Activated naive CD4-positive, alpha-beta T cell treated with anti-CD3 and anti-CD28 coated beads for 36 hours (primary cell): ENCODE measurements at regions of chr4 and their contacts with region 1.

Region 1: DNA sequence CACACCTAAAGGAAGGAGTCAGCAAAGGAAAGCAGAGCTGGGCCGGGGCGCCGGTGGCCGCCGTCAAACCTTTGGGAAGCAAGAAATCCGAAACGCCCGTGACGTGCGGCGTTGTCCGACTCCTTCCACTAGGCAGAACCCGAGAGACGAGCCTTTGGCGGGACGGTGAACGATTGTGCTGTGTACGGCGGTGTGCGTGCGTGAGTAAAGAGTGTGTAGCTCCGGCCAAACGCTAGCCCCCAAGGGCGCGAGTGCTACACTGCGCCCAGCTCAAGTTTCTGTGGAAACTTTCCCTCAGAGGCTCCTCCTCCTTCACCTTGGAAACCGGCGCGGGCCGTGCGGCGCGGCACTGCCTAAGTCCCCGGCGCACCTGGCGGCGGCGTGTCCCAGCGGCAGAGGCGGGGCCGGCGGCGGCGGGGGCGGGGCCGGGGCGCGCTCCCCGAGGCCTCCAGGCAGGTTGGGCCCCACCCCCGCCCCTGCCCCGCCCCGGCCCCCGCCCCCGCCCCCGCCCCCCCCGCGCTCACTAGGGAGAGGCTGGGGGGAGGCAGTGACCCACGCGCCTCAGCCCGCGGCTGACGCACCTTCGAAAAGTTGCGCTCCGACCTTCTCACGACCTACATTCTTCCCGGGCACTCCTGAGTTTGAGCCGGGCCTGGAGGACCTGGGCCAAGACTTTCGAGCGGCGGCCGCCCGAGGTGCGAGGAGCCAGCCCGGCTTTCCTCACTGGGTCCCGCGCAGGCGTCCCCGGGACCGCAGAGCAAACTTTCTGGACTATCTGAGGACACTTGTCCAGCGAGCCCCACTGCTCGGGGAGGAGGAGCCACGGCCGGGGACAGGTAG is at the start of gene FHIP1A:
- DNase-seq: peak; percentile 89
- H3K4me3 Mint-ChIP-seq: peak within 1 kb of the TSS; percentile 88
- H3K27ac Mint-ChIP-seq: peak within 1 kb of the TSS; percentile 60
- H3K4me1 Mint-ChIP-seq: peaks cover 22% of the 10 kb centered on the region
- H3K27me3 Mint-ChIP-seq: peaks cover 17% of the 10 kb centered on the region
- total RNA-seq, gene FHIP1A: 0.07 to 0.17 TPM

Region 2: GRCh38 chr4:151015459-151016347 is 393.1 kb before region 1 on chr4:
- CTCF ChIA-PET with region 1: no interaction called
- intact Hi-C with region 1: loop called (anchors 5 kb)
- DNase-seq: peak; percentile 71
- H3K4me3 Mint-ChIP-seq: peak overlapping the region; percentile 100
- H3K27ac Mint-ChIP-seq: peak overlapping the region; percentile 99
- H3K4me1 Mint-ChIP-seq: peaks cover 23% of the 10 kb centered on the region
- H3K27me3 Mint-ChIP-seq: no peaks in the 10 kb centered on the region

Region 3: GRCh38 chr4:151604238-151604637 is 195.4 kb after region 1 on chr4:
- CTCF ChIA-PET with region 1: no interaction called
- intact Hi-C with region 1: loop called (anchors 2 kb)
- DNase-seq: no peak
- H3K4me3 Mint-ChIP-seq: no peak overlapping the region
- H3K27ac Mint-ChIP-seq: no peak overlapping the region
- H3K4me1 Mint-ChIP-seq: no peaks in the 10 kb centered on the region
- H3K27me3 Mint-ChIP-seq: no peaks in the 10 kb centered on the region

Region 4: DNA sequence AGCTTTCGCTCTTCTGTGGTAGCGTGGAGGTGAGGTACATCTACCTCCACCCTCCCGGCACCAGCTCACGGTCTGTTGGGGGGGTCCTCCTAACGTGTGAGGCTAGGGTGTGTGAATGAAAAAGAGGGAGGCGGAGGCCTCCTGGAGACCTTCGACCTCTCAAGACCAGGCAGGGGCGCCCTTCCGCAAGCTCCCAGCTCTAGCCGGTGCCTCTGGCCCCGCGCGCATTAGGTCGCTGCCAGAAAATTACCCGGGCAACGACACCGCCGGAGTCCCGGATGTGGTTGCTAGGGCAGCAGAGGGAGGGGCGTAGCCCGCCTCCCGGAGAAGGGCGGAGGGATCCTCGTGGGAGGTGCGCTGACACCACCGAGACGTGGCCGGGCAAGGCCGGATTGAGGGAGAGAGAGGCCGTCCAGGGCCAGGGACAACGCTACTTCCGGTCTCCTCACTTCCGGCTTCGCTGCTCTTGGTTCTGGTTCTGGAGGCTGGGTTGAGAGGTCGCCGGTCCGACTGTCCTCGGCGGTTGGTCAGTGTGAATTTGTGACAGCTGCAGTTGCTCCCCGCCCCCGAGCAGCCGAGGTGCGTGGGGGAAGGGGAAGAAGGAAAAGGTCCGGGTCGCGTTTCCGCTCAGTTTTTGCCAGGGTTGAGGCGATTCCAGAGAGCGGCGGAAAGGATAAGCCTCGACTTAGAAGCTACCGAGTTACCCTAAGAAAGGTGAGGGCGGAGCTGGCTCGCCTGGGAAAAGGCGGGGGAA is 1370.8 kb after region 1 on chr4 and contains the starts of genes ARFIP1 and TIGD4:
- CTCF ChIA-PET with region 1: no interaction called
- intact Hi-C with region 1: loop called (anchors 5 kb)
- DNase-seq: peak; percentile 97
- H3K4me3 Mint-ChIP-seq: peak within 1 kb of the TSS; percentile 91
- H3K27ac Mint-ChIP-seq: peak within 1 kb of the TSS; percentile 75
- H3K4me1 Mint-ChIP-seq: peaks cover 23% of the 10 kb centered on the region
- H3K27me3 Mint-ChIP-seq: peaks cover 4% of the 10 kb centered on the region
- total RNA-seq, gene ARFIP1: 5.0 to 5.1 TPM
- total RNA-seq, gene TIGD4: 0.07 to 0.27 TPM